HEK293T (cell line): ENCODE measurements at regions of chrX and their contacts with region 1.

Region 1: DNA sequence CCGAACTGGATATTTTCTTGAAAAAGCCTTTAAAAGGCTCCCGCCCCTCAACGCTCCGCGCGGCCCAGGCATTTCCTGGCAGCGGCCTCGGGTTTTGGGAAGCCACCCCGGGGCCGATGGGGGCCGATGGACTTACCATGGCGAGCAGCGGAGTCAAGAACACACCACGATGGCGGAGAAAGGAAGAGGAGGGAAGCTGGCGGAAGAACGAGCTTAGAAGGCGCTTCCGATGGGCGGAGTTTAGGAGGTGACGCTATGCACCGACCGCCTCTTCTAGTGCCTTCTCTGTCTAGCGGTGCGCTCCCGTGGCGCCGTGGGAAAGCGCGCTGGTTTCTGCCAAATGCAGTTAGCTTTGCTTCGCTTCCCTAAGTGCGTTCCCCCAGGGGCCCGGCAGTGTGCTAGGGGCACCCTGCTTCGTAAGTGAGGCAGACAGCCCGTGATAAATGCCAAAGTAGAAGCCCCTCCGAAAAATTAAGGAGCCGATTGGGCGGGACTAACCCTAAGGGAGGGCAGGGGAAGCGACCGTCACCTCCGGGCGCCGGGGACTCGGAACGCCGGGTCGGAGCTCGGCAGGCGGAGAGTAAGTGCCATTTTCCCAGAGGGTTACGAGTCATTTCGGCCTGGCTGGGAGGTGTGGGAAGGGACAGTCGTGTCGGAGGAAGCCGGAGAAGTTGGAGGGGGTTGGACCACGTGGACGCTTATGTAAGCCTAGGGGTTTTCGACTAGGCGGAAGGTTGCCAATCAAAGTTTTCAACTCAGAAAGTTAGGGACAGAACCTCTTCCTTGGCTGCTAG is at the start of gene RPL39:
- DNase-seq: peak; percentile 83

Region 2: GRCh38 chrX:119541188-119541587 is 250.4 kb before region 1 on chrX:
- CTCF ChIA-PET with region 1: no interaction called
- POLR2A ChIA-PET with region 1: no interaction called
- DNase-seq: no peak

Region 3: GRCh38 chrX:119574394-119575266 is 217.0 kb before region 1 on chrX and contains the start of gene UBE2A:
- CTCF ChIA-PET with region 1: no interaction called
- POLR2A ChIA-PET with region 1: interaction called, 11 read pairs
- DNase-seq: peak; percentile 95

Region 4: GRCh38 chrX:119757979-119758730 is 33.5 kb before region 1 on chrX and contains the start of gene SOWAHD:
- CTCF ChIA-PET with region 1: interaction called, 3 read pairs
- POLR2A ChIA-PET with region 1: interaction called, 28 read pairs
- DNase-seq: peak; percentile 53

Region 5: GRCh38 chrX:119809185-119809666 is 17.6 kb after region 1 on chrX:
- CTCF ChIA-PET with region 1: no interaction called
- POLR2A ChIA-PET with region 1: interaction called, 16 read pairs
- DNase-seq: no peak

Region 6: GRCh38 chrX:119871599-119872395 is 80.2 kb after region 1 on chrX and contains the starts of genes NDUFA1 and RNF113A:
- CTCF ChIA-PET with region 1: no interaction called
- POLR2A ChIA-PET with region 1: interaction called, 32 read pairs
- DNase-seq: peak; percentile 83

Region 7: GRCh38 chrX:119970574-119970973 is 178.9 kb after region 1 on chrX:
- CTCF ChIA-PET with region 1: no interaction called
- POLR2A ChIA-PET with region 1: no interaction called
- DNase-seq: no peak